Aorta (tissue), 5 donors: ENCODE measurements at regions of chr20 and their contacts with region 1.

Region 1: DNA sequence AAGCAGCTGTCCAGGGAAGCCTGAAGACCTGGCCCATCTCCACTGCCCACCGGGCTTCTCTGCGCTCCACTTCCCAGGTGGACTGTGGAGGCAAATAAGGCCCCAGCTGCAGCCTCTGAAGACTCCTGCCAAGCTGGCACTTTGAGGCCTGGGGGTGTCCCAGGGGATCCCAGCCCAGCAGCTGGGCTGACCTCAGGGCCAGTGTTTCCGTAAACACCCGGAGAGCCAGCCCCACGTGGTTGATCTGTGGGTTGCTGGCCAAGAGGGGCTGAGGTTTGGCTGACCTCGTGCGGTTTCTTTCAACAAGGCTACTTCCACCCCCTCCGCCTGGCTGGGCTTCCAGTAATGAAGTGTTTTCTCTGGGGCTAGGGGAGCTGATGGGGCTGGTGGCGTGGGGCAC is 12.4 kb upstream of the CCN5 start:
- DNase-seq: peak; percentile 94 to 95
- ATAC-seq: peak; percentile 89
- H3K4me3 ChIP-seq: no peak overlapping the region
- H3K27ac ChIP-seq: peak overlapping the region; percentile 46 to 95
- H3K4me1 ChIP-seq: no peaks in the 10 kb centered on the region
- H3K27me3 ChIP-seq: no peaks in the 10 kb centered on the region

Region 2: DNA sequence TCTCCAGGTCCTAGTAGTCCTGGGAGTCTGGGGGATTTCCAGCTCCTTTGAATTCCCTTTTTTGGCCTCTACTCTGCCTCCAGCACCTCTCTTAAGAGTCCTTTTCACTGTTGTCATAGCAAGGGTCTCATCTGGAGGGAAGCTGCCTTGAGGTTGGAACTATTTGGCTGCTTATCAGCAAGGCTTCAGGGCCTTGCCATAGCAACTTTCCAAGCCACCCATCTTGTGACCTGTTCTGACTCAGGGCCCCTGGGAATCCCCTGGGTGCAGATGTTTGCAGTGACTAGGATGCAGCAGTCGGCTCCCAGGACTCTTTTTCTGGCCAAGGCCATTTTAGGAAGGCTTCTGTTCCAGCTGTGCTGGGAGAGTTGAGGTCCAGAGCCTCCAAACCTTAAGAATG is 108.0 kb before region 1 on chr20:
- intact Hi-C with region 1: no loop called
- DNase-seq: peak in 1 of 2 donors; percentile 73
- ATAC-seq: peak; percentile 30
- H3K4me3 ChIP-seq: no peak overlapping the region
- H3K27ac ChIP-seq: peak overlapping the region; percentile 58 to 76
- H3K4me1 ChIP-seq: peaks cover 7 to 12% of the 10 kb centered on the region in 2 donors
- H3K27me3 ChIP-seq: no peaks in the 10 kb centered on the region

Region 3: DNA sequence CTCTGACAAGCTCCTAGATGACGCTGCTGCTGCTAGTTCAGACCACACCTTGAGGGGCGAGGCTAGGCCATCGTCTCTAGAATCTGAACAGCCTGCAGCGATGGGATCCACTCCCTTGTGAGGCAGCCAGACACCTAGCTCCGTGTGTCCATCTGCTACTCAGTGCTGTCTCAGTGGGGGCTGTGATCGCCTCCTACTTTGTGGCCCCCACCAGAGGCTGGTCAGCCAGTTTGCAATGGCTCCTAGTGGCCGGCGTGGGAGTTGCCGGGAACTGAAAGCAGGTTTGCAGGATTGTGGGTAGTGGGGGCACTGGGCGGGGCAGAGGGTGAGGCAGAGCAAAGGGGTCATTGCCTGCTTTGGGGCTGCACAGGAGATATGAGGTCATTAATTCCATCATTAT is 15.2 kb after region 1 on chr20:
- intact Hi-C with region 1: loop called in 1 of 2 experiments (anchors 2 kb)
- DNase-seq: no peak
- ATAC-seq: no peak
- H3K4me3 ChIP-seq: no peak overlapping the region
- H3K27ac ChIP-seq: no peak overlapping the region
- H3K4me1 ChIP-seq: peaks cover 3 to 12% of the 10 kb centered on the region in 2 donors
- H3K27me3 ChIP-seq: no peaks in the 10 kb centered on the region